IMR-90 (cell line): ENCODE measurements at regions of chr3 and their contacts with region 1.

Region 1: DNA sequence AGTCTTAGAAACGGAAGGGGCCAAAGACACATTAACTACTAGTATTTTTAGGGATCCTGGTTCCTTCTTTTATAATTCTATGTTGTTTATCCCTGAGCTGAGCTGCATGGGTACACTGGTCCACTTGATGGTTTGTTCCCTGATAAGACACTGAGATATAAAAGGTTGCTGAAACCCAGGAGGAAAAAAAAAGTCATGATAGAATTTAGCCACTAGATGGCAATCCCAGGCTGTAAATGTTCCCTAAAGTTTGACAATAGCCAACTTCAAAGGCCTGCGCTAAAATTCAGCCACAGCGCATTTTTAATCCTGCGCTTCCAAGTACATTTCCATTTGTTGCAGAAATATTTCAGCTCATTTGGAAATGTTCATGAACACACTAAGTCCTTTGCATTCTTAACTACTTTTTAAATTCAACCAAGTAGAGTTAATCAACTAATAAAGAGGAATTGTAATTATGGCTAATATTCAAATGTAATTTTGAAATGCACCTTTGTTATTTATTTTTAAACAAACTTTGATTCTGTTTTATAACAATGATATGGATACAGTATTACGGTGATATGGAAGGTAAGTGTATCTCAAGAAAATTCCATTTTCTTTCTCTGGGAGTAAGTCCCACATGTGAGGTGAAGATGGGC is 249.3 kb upstream of the FEZF2 start:
- DNase-seq: peak; percentile 61
- ATAC-seq: peak; percentile 71
- H3K4me3 ChIP-seq: no peak overlapping the region
- H3K27ac ChIP-seq: no peak overlapping the region
- H3K4me1 ChIP-seq: no peaks in the 10 kb centered on the region
- H3K27me3 ChIP-seq: peaks cover 14% of the 10 kb centered on the region
- CTCF ChIP-seq: peak; percentile 77
- POLR2A ChIP-seq: no peak
- RAD21 ChIP-seq: peak; percentile 72

Region 2: GRCh38 chr3:62284442-62284841 is 338.2 kb before region 1 on chr3:
- CTCF ChIA-PET with region 1: no interaction called
- POLR2A ChIA-PET with region 1: no interaction called
- dilution Hi-C with region 1: no loop called
- in situ Hi-C with region 1: no loop called
- intact Hi-C with region 1: no loop called
- DNase-seq: no peak
- ATAC-seq: no peak
- H3K4me3 ChIP-seq: no peak overlapping the region
- H3K27ac ChIP-seq: no peak overlapping the region
- H3K4me1 ChIP-seq: no peaks in the 10 kb centered on the region
- H3K27me3 ChIP-seq: no peaks in the 10 kb centered on the region
- CTCF ChIP-seq: no peak
- POLR2A ChIP-seq: no peak
- RAD21 ChIP-seq: no peak

Region 3: DNA sequence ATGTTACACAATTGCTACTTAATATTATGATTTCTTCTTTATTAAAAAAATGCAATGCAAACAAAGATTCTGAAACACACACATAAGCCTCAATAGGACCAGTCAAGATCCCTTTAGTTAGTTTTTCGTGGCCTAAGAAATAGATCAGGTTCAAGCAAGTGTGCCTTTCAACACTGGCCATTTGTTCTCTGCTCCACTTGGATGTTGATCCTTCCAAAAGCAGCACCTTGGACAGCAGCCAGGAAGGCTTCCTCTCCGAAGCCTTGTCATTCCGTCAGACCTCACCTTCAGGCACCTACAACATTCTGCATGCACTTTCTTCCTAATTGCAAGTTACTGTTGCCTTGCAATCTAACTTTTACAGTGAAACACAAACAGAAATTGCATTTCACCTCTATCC is 93.5 kb before region 1 on chr3:
- CTCF ChIA-PET with region 1: no interaction called
- POLR2A ChIA-PET with region 1: no interaction called
- dilution Hi-C with region 1: no loop called
- in situ Hi-C with region 1: no loop called
- intact Hi-C with region 1: no loop called
- DNase-seq: peak; percentile 8
- ATAC-seq: no peak
- H3K4me3 ChIP-seq: no peak overlapping the region
- H3K27ac ChIP-seq: no peak overlapping the region
- H3K4me1 ChIP-seq: no peaks in the 10 kb centered on the region
- H3K27me3 ChIP-seq: no peaks in the 10 kb centered on the region
- CTCF ChIP-seq: no peak
- POLR2A ChIP-seq: no peak
- RAD21 ChIP-seq: no peak

Region 4: DNA sequence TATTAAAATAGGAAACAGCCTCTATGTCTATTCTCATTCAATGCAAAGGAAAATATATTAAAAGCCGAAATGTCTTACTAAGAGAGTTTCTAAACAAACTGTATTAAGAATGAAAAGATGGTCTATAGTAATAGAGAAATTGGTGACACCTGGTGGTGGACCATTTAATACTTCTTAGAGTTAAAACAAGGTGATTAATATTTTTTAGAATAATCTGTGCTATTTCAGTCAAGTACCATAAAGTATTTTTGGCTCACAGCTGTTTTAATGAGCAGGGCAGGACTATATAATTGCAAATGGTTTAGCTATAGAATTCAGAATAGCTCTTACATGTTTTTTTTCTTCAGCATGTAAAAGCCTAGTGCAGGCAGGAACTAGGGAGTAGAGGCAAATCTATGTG is 711.2 kb after region 1 on chr3:
- CTCF ChIA-PET with region 1: interaction called, 5 read pairs
- POLR2A ChIA-PET with region 1: no interaction called
- dilution Hi-C with region 1: no loop called
- in situ Hi-C with region 1: loop called (anchors 25 kb)
- intact Hi-C with region 1: loop called (anchors 2 kb)
- DNase-seq: peak; percentile 9
- ATAC-seq: no peak
- H3K4me3 ChIP-seq: no peak overlapping the region
- H3K27ac ChIP-seq: no peak overlapping the region
- H3K4me1 ChIP-seq: no peaks in the 10 kb centered on the region
- H3K27me3 ChIP-seq: no peaks in the 10 kb centered on the region
- CTCF ChIP-seq: 0 out of 2 replicates have a peak, but pooled peaks have one; percentile 16
- POLR2A ChIP-seq: no peak
- RAD21 ChIP-seq: no peak

Region 5: GRCh38 chr3:63349583-63350521 is 727.2 kb after region 1 on chr3:
- CTCF ChIA-PET with region 1: no interaction called
- POLR2A ChIA-PET with region 1: no interaction called
- dilution Hi-C with region 1: no loop called
- in situ Hi-C with region 1: loop called (anchors 25 kb)
- intact Hi-C with region 1: no loop called
- DNase-seq: peak; percentile 65
- ATAC-seq: peak; percentile 85
- H3K4me3 ChIP-seq: no peak overlapping the region
- H3K27ac ChIP-seq: no peak overlapping the region
- H3K4me1 ChIP-seq: no peaks in the 10 kb centered on the region
- H3K27me3 ChIP-seq: peaks cover 2% of the 10 kb centered on the region; the same call in 1 of the 2 replicates
- CTCF ChIP-seq: peak; percentile 83
- POLR2A ChIP-seq: no peak
- RAD21 ChIP-seq: peak; percentile 71

Region 6: DNA sequence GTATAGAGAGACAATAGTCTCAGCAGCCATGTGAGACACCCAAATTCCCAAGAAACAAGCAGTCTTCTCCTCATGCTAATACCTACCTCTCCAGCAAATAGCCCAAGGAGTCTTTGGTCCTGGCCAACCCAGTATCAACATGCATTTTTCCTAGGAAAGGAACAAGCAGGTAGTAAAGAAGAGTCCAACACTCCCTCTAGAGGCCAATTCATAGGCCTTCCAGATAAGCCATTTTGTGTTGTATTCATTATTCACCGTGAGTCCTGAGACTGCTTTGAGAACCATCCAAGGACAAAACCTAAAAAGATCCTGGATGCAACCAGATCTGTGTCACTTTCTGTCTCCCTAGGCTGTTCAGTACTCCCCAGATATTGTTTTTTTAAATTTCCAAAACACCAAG is 966.2 kb after region 1 on chr3:
- CTCF ChIA-PET with region 1: no interaction called
- POLR2A ChIA-PET with region 1: no interaction called
- dilution Hi-C with region 1: no loop called
- in situ Hi-C with region 1: no loop called
- intact Hi-C with region 1: no loop called
- DNase-seq: no peak
- ATAC-seq: no peak
- H3K4me3 ChIP-seq: no peak overlapping the region
- H3K27ac ChIP-seq: no peak overlapping the region
- H3K4me1 ChIP-seq: no peaks in the 10 kb centered on the region
- H3K27me3 ChIP-seq: no peaks in the 10 kb centered on the region
- CTCF ChIP-seq: no peak
- POLR2A ChIP-seq: no peak
- RAD21 ChIP-seq: no peak